ENCODE measurements at regions of chr10 and their contacts with region 1.

Region 1: GRCh38 chr10:6088721-6089390 is at the start of gene RBM17:
- DNase-seq: peak; percentile 98
- H3K4me3 Mint-ChIP-seq: peak within 1 kb of the TSS; percentile 96
- H3K27ac Mint-ChIP-seq: peak within 1 kb of the TSS; percentile 54
- H3K4me1 Mint-ChIP-seq: peaks cover 71% of the 10 kb centered on the region
- H3K27me3 Mint-ChIP-seq: no peaks in the 10 kb centered on the region
- total RNA-seq, gene RBM17: 155 to 157 TPM

Region 2: DNA sequence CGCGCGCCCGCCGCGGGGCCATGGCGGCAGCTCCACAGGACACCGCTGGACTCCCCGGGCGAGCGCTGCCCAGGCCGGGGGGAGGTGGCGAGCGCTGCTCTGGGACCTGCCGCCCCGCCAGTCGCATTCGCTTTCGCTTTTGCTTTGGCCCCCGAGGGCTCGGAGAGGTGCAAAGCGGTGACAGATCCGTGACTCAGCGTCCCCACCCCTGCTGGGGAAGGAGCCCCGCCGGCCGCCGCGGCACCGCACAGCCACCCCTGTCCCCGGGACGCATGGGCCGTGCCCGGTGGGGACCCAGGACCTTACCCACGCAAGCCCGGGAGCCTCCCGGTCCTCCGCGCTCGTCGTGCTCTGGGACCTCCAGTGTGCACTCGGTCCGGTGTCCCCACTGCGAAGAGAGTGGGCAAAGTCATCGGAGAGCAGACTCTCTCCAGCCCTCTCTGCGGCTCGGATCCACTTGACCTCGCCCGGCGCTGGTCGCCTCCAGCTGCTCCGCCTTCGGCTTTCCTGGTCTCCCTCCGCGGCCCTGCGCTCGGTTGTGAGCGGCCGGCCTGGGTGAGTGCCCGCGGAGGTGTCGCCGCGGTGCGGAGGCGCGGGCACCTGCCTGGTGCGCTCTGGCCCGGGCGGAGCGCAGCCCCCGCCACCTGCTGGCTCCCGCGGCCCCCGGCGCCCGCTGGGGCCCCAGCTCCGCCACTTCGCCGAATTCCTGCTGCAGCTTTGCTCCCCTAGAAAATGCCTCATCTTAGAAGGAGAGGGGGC is 111.2 kb before region 1 on chr10 and contains the start of gene IL15RA:
- CTCF ChIA-PET with region 1: interaction called, 15 read pairs
- POLR2A ChIA-PET with region 1: interaction called, 8 read pairs
- DNase-seq: peak; percentile 91
- H3K4me3 Mint-ChIP-seq: peak within 1 kb of the TSS; percentile 91
- H3K27ac Mint-ChIP-seq: peak within 1 kb of the TSS; percentile 95
- H3K4me1 Mint-ChIP-seq: peaks cover 30% of the 10 kb centered on the region
- H3K27me3 Mint-ChIP-seq: no peaks in the 10 kb centered on the region
- total RNA-seq, gene IL15RA: 22.1 to 24.5 TPM

Region 3: GRCh38 chr10:6033954-6034353 is 54.9 kb before region 1 on chr10:
- CTCF ChIA-PET with region 1: interaction called, 17 read pairs
- POLR2A ChIA-PET with region 1: interaction called, 12 read pairs
- DNase-seq: no peak
- H3K4me3 Mint-ChIP-seq: no peak overlapping the region
- H3K27ac Mint-ChIP-seq: peak overlapping the region; percentile 48
- H3K4me1 Mint-ChIP-seq: peaks cover 74% of the 10 kb centered on the region
- H3K27me3 Mint-ChIP-seq: no peaks in the 10 kb centered on the region

Region 4: GRCh38 chr10:6050801-6051445 is 37.9 kb before region 1 on chr10:
- CTCF ChIA-PET with region 1: interaction called, 58 read pairs
- POLR2A ChIA-PET with region 1: interaction called, 73 read pairs
- DNase-seq: peak; percentile 94
- H3K4me3 Mint-ChIP-seq: peak overlapping the region; percentile 80
- H3K27ac Mint-ChIP-seq: peak overlapping the region; percentile 97
- H3K4me1 Mint-ChIP-seq: peaks cover 86% of the 10 kb centered on the region
- H3K27me3 Mint-ChIP-seq: no peaks in the 10 kb centered on the region

Region 5: GRCh38 chr10:6068422-6068821 is 20.4 kb before region 1 on chr10:
- CTCF ChIA-PET with region 1: interaction called, 138 read pairs
- POLR2A ChIA-PET with region 1: interaction called, 168 read pairs
- DNase-seq: peak; percentile 50
- H3K4me3 Mint-ChIP-seq: peak overlapping the region; percentile 67
- H3K27ac Mint-ChIP-seq: peak overlapping the region; percentile 96
- H3K4me1 Mint-ChIP-seq: peaks cover 97% of the 10 kb centered on the region
- H3K27me3 Mint-ChIP-seq: no peaks in the 10 kb centered on the region